Mammary epithelial cell (primary cell): ENCODE measurements at regions of chr10 and their contacts with region 1.

Region 1: GRCh38 chr10:92087750-92088395 is 164.3 kb downstream of the BTAF1 start:
- DNase-seq: peak; percentile 75
- H3K4me3 ChIP-seq: no peak overlapping the region
- H3K27ac ChIP-seq: no peak overlapping the region
- H3K4me1 ChIP-seq: no peaks in the 10 kb centered on the region
- H3K27me3 ChIP-seq: no peaks in the 10 kb centered on the region
- CTCF ChIP-seq: peak; percentile 89 to 92

Region 2: GRCh38 chr10:92181575-92181974 is 93.7 kb after region 1 on chr10:
- CTCF ChIA-PET with region 1: no interaction called
- dilution Hi-C with region 1: loop called (anchors 10 kb)
- in situ Hi-C with region 1: no loop called
- intact Hi-C with region 1: no loop called
- DNase-seq: no peak
- H3K4me3 ChIP-seq: no peak overlapping the region
- H3K27ac ChIP-seq: no peak overlapping the region
- H3K4me1 ChIP-seq: no peaks in the 10 kb centered on the region
- H3K27me3 ChIP-seq: no peaks in the 10 kb centered on the region
- CTCF ChIP-seq: peak; percentile 17 to 35

Region 3: DNA sequence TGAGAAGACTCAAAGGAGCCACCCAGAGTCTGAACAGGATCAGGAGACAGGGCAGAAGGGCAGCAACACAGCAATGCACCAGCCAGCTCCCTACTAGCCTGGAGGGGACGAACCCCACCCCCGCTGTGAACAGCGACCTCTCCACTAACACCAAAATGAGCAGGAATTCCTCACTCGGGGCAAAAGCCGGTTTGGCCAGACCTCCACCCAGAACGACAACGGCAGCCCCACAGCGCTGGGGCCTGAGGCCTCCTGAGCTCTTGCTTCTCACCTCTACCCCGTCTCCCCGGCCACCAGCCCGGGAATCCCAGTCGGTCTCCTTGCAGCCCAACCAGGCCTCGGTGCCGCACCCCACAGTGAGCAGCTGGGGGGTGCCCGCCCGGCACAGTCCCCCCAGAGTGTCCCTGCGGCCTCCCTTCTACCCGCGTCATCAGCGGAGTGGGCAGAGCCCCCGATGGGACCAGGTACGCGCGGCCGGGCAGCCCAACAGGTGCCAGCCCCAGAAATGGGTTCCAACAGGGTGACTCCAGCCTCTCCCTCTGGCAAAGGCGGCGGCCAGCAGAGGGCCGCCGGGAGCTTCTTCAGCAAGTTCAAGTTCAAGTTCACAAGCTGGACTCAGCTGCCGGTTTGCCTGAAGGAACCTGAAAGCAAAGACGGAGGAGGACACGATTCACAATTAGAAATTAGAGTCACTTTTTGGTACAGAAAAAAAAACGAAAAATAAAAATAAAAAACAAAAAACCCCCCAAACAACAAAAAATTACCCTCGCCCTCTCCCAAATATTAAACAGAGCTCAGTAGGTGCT is 332.1 kb after region 1 on chr10:
- CTCF ChIA-PET with region 1: no interaction called
- dilution Hi-C with region 1: loop called (anchors 25 kb)
- in situ Hi-C with region 1: no loop called
- intact Hi-C with region 1: no loop called
- DNase-seq: no peak
- H3K4me3 ChIP-seq: no peak overlapping the region
- H3K27ac ChIP-seq: no peak overlapping the region
- H3K4me1 ChIP-seq: peaks cover 3% of the 10 kb centered on the region
- H3K27me3 ChIP-seq: peaks cover 5% of the 10 kb centered on the region
- CTCF ChIP-seq: peak in 1 of 2 donors; percentile 26

Region 4: GRCh38 chr10:92432596-92432995 is 344.7 kb after region 1 on chr10:
- CTCF ChIA-PET with region 1: no interaction called
- dilution Hi-C with region 1: no loop called
- in situ Hi-C with region 1: loop called (anchors 5 kb)
- intact Hi-C with region 1: loop called (anchors 1 kb)
- DNase-seq: no peak
- H3K4me3 ChIP-seq: no peak overlapping the region
- H3K27ac ChIP-seq: no peak overlapping the region
- H3K4me1 ChIP-seq: no peaks in the 10 kb centered on the region
- H3K27me3 ChIP-seq: no peaks in the 10 kb centered on the region
- CTCF ChIP-seq: no peak